Lower leg skin (tissue), 4 donors: ENCODE measurements at regions of chr5 and their contacts with region 1.

Region 1: DNA sequence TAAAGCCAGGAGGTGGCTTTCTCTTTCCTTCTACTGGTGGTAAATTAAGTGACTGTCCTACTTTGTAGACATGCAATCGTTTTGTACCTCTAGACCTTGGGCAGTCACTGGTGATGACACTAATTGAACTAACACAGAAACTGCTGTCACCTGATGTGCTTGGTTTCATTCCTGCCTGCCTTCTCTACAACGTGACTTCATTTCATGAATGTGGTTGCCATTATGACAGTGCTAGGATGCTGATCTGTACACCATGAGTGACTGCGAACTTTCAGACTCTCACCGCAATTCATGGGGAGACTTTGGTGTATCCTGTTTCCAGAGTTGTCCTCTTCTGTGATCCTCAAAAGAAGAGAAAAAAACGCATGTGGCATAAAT is 47.5 kb downstream of the UBE2QL1 start:
- DNase-seq: no peak
- H3K4me3 ChIP-seq: no peak overlapping the region
- CTCF ChIP-seq: no peak
- POLR2A ChIP-seq: no peak

Region 2: GRCh38 chr5:6069496-6070185 is 426.6 kb before region 1 on chr5:
- intact Hi-C with region 1: no loop called
- DNase-seq: no peak
- H3K4me3 ChIP-seq: no peak overlapping the region
- CTCF ChIP-seq: no peak
- POLR2A ChIP-seq: no peak

Region 3: GRCh38 chr5:6448622-6449464 is 47.4 kb before region 1 on chr5 and contains the start of gene UBE2QL1:
- intact Hi-C with region 1: loop called (anchors 2 kb)
- DNase-seq: no peak
- H3K4me3 ChIP-seq: no peak within 1 kb of the TSS
- CTCF ChIP-seq: no peak
- POLR2A ChIP-seq: no peak
- total RNA-seq, gene UBE2QL1: 0.72 to 3.4 (median 1.3) TPM

Region 4: DNA sequence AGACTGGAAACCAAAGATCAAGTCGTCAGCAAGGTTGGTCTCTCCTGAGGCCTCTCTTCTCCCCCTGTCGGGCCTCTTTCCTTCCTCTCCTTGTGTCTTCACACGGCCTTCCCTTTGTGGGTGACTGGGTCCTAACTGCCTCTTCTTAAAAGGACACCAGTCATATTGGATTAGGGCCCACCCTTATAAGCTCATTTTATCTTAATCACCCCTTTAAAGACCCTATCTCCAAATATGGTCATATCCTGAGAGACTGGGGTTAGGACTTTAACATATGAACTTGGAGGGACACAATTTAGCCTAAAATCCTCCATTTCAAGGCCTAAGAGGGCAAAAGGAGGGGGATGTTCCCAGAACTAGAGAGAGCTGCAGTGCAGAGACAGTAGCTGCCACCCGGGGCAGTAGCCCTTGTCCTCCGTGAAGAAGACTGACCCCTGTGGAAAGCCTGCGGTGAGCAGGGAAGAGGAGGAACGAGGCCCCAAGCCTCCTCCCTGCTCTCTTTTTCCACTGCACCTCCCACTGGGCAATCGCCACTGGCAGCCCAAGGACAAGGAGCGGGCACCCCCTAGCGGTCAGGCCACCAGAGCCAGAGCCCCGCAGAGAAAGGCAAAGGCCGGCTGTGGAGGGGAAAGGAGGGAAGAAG is 1319.8 kb after region 1 on chr5:
- intact Hi-C with region 1: no loop called
- DNase-seq: peak; percentile 75 to 95
- H3K4me3 ChIP-seq: no peak overlapping the region
- CTCF ChIP-seq: peak in 1 of 3 donors; percentile 59
- POLR2A ChIP-seq: no peak